Gastrocnemius medialis (tissue), 4 donors: ENCODE measurements at regions of chr2 and their contacts with region 1.

Region 1: GRCh38 chr2:189179570-189179950 is at the start of gene COL5A2:
- DNase-seq: peak; percentile 23 to 25
- ATAC-seq: peak; percentile 85 to 86
- H3K4me3 ChIP-seq: peak within 1 kb of the TSS; percentile 50 to 54 (median 50)
- H3K27ac ChIP-seq: peak within 1 kb of the TSS; percentile 45 to 59 (median 52)
- H3K4me1 ChIP-seq: peaks cover 0 to 8% of the 10 kb centered on the region in 2 donors
- H3K27me3 ChIP-seq: no peaks in the 10 kb centered on the region
- CTCF ChIP-seq: no peak
- POLR2A ChIP-seq: peak in 1 of 2 donors; percentile 41
- total RNA-seq, gene COL5A2: 4.4 to 9.8 (median 6.2) TPM

Region 2: DNA sequence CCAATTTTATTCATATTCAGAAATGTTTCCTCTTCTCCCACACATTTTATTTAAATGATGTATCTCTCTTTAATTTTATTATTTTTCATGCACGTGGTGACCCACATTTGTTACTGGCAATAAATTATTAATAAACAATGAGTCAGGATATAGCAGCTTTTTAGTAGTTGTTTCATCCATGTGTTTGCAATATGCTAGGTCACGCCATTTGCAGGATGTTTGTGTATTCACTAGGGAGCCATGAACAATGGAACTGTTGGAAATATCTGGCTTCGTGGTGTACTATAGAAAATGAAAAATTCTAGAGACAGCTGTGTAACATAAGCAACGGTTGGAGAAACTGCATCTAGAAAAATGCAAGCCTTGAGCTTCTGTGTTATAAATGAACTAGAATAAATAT is 381.4 kb before region 1 on chr2:
- in situ Hi-C with region 1: no loop called
- intact Hi-C with region 1: no loop called
- DNase-seq: no peak
- ATAC-seq: no peak
- H3K4me3 ChIP-seq: no peak overlapping the region
- H3K27ac ChIP-seq: no peak overlapping the region
- H3K4me1 ChIP-seq: no peaks in the 10 kb centered on the region
- H3K27me3 ChIP-seq: no peaks in the 10 kb centered on the region
- CTCF ChIP-seq: no peak
- POLR2A ChIP-seq: no peak

Region 3: DNA sequence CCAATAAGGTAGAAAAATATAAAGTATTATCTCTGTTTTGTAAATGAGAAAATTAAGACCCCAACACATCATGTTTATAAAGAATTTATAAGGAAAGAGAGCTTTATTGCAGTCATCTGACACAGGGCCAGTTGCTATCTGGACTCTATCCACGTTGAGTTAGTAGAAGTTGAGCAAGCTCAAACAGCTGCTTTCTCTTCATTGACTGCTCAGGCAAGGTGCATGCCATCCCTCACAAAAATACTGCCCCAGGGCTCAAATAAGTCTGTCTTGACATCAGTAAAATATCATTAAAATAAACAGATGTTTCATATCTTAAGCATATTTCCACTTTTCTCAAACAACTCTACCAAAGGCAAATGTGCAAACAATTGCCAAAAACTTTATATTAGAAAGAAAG is 14.8 kb before region 1 on chr2:
- in situ Hi-C with region 1: no loop called
- intact Hi-C with region 1: no loop called
- DNase-seq: peak; percentile 38 to 45
- ATAC-seq: peak; percentile 93 to 94
- H3K4me3 ChIP-seq: no peak overlapping the region
- H3K27ac ChIP-seq: peak overlapping the region; percentile 39 to 63 (median 58)
- H3K4me1 ChIP-seq: peaks cover 13 to 34% of the 10 kb centered on the region in 2 donors
- H3K27me3 ChIP-seq: no peaks in the 10 kb centered on the region
- CTCF ChIP-seq: no peak
- POLR2A ChIP-seq: no peak

Region 4: DNA sequence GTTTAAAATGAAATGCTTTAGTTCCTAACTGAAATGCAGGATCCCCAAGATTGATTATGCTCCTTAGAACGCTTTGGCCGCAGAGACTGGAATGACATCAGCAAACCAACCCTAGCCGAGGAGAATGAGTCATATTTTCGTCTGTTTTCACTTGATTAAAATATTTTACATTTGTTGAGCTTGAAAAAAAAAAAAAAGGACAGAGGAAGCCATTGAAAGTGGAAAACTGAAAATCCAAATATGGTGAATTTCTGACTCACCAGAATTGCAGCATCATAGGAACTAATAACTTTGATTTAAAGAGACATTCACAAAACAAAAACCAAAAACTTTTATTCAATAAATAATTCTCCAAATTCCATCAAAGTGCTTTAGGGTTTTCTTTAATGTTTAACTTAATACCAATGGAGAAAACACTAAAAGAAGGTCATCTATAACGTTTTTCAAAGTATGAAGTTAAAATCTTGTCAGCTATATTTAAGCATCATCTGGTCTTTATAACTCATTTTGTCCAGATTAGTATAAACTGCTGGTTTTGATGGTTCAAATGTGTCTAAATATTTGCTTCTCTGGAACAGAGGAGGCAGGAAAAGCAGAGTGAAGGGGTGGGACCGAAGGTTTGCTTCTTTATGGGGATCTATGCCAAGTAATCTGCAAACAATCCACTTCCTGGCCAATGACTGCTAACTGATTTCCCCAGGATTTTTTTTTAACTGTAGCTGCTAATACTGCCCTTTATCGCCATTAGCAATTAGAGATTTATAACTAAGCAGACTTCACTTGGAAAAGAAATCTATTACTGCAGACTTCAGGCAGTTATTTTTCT is 30.9 kb after region 1 on chr2:
- in situ Hi-C with region 1: no loop called
- intact Hi-C with region 1: loop called (anchors 5 kb)
- DNase-seq: peak in 1 of 2 donors; percentile 15
- ATAC-seq: peak; percentile 61 to 68
- H3K4me3 ChIP-seq: peak overlapping the region; percentile 18 to 45 (median 23)
- H3K27ac ChIP-seq: peak overlapping the region; percentile 53 to 71 (median 64)
- H3K4me1 ChIP-seq: peaks cover 3 to 4% of the 10 kb centered on the region in 2 donors
- H3K27me3 ChIP-seq: no peaks in the 10 kb centered on the region
- CTCF ChIP-seq: no peak
- POLR2A ChIP-seq: no peak